CD4-positive, alpha-beta T cell (primary cell): ENCODE measurements at regions of chr9 and their contacts with region 1.

Region 1: GRCh38 chr9:19925817-19926503 is 137.1 kb upstream of the SLC24A2 start:
- DNase-seq: peak; percentile 62 to 89 (median 72)
- ATAC-seq: peak; percentile 100
- H3K4me3 ChIP-seq: peak overlapping the region; percentile 21
- H3K4me3 Mint-ChIP-seq: peak overlapping the region; percentile 47
- H3K27ac ChIP-seq: no peak overlapping the region
- H3K27ac Mint-ChIP-seq: no peak overlapping the region
- H3K4me1 ChIP-seq: peaks cover 7% of the 10 kb centered on the region
- H3K4me1 Mint-ChIP-seq: peaks cover 5% of the 10 kb centered on the region
- H3K27me3 ChIP-seq: no peaks in the 10 kb centered on the region
- H3K27me3 Mint-ChIP-seq: peaks cover 15% of the 10 kb centered on the region
- CTCF ChIP-seq: peak; percentile 94

Region 2: GRCh38 chr9:19493174-19493811 is 432.7 kb before region 1 on chr9:
- CTCF ChIA-PET with region 1: no interaction called
- POLR2A ChIA-PET with region 1: no interaction called
- intact Hi-C with region 1: loop called in 1 of 2 experiments (anchors 10 kb)
- DNase-seq: peak in 12 of 14 experiments; percentile 2 to 65 (median 26)
- ATAC-seq: peak; percentile 73
- H3K4me3 ChIP-seq: peak overlapping the region; percentile 15
- H3K4me3 Mint-ChIP-seq: no peak overlapping the region
- H3K27ac ChIP-seq: no peak overlapping the region
- H3K27ac Mint-ChIP-seq: no peak overlapping the region
- H3K4me1 ChIP-seq: peaks cover 6% of the 10 kb centered on the region
- H3K4me1 Mint-ChIP-seq: peaks cover 9% of the 10 kb centered on the region
- H3K27me3 ChIP-seq: peaks cover 0 to 6% of the 10 kb centered on the region in 2 experiments
- H3K27me3 Mint-ChIP-seq: peaks cover 8% of the 10 kb centered on the region
- CTCF ChIP-seq: peak; percentile 73